Left colon (tissue), 2 donors: ENCODE measurements at regions of chr15 and their contacts with region 1.

Region 1: GRCh38 chr15:29183071-29183831 is 86.4 kb downstream of the NSMCE3 start:
- DNase-seq: no peak
- ATAC-seq: no peak

Region 2: GRCh38 chr15:29124581-29125381 is 58.5 kb before region 1 on chr15:
- intact Hi-C with region 1: loop called in 1 of 2 experiments (anchors 10 kb)
- DNase-seq: no peak
- ATAC-seq: no peak

Region 3: DNA sequence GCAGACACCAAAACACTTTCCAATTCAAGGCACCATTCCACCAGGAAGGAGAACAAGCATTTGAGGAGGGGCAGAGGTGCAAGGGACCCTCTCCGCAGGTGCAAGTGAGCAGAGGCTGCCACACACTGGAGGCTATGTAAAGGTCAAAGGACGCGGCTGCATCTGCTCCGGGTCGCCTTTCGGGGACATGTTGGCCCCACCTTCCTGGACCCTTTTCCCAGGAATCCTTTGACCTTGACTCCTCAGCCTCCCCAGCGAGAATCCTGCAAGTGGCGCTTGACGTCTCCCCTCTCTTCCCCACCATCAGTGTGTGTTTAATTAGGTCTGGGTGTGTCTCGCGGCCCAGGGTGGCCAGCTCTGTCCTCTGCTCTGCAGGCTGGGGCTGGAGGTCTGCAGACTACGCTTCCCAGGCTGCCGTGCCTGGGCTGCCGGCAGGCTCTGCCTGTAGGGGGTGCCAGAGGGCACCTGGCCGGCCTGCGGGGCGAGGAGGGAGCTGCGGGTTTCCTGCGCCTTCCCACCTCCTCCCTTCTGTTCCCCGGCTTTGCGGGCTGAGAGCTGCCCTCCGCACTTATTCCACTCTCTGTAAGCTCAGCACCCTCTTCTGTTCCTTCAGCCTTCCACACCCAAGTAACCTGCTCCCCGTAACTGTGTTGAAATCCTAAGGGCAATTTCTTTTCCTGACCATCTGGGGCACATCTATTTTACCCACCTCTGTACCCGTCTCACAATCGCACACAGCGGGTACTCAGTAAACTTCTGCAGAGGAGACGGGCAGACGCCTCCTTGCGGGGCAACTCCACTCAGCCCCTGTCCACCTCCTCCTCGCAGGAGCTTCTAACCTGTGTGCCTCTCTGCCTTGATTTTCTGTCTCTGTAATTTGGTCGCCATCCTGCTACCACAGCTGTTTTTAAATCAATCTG is 43.5 kb before region 1 on chr15:
- intact Hi-C with region 1: loop called in 1 of 2 experiments (anchors 5 kb)
- DNase-seq: peak in 1 of 2 donors; percentile 56
- ATAC-seq: peak; percentile 88